CD8-positive, alpha-beta T cell (primary cell): ENCODE measurements at regions of chr13 and their contacts with region 1.

Region 1: DNA sequence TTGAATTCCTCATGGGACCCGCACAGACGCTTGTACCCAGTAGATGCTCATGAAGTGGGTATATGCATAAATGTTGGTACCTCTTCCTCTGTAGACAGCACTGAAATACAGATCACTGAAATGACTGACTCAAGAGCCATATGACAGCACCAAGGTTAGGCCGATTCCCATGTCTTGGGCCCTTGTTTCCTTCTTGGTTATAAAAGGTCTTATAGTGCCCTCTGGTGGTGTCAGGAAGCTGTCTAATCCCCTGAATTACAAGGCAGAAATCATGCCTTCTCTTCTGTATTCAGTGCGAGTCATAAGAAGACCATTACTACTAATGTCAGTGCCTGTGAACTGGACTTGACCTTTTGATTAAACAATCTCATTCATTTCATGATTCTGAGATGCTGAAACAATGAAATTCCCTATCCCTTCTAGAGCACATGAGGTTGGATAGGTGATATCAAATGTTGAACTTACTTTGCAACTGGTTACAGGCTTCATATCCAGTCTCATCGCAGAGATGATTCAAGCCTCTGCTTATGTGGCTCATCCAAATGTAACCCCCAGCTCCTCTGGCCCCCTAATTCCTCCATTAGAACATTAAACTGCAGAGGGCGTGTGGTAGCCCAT is 59.7 kb downstream of the SPATA13 start:
- DNase-seq: peak in 6 of 9 experiments; percentile 41 to 86 (median 54)
- ATAC-seq: peak; percentile 82
- H3K4me3 ChIP-seq: no peak overlapping the region
- H3K4me3 Mint-ChIP-seq: no peak overlapping the region
- H3K27ac ChIP-seq: no peak overlapping the region
- H3K27ac Mint-ChIP-seq: no peak overlapping the region
- H3K4me1 ChIP-seq: peaks cover 19% of the 10 kb centered on the region
- H3K4me1 Mint-ChIP-seq: peaks cover 49% of the 10 kb centered on the region
- H3K27me3 ChIP-seq: no peaks in the 10 kb centered on the region
- H3K27me3 Mint-ChIP-seq: no peaks in the 10 kb centered on the region
- CTCF ChIP-seq: peak; percentile 74

Region 2: GRCh38 chr13:23888658-23889614 is 331.3 kb before region 1 on chr13 and contains the start of gene MIPEP:
- CTCF ChIA-PET with region 1: no interaction called
- POLR2A ChIA-PET with region 1: no interaction called
- intact Hi-C with region 1: loop called in 1 of 2 experiments (anchors 10 kb)
- DNase-seq: peak; percentile 73 to 95 (median 87)
- ATAC-seq: peak; percentile 93
- H3K4me3 ChIP-seq: peak within 1 kb of the TSS; percentile 79
- H3K4me3 Mint-ChIP-seq: peak within 1 kb of the TSS; percentile 90
- H3K27ac ChIP-seq: peak within 1 kb of the TSS; percentile 61 to 71
- H3K27ac Mint-ChIP-seq: peak within 1 kb of the TSS; percentile 88
- H3K4me1 ChIP-seq: peaks cover 7% of the 10 kb centered on the region
- H3K4me1 Mint-ChIP-seq: peaks cover 23% of the 10 kb centered on the region
- H3K27me3 ChIP-seq: no peaks in the 10 kb centered on the region
- H3K27me3 Mint-ChIP-seq: peaks cover 3% of the 10 kb centered on the region
- CTCF ChIP-seq: peak; percentile 65
- total RNA-seq, gene MIPEP: 3.0 to 3.8 TPM

Region 3: DNA sequence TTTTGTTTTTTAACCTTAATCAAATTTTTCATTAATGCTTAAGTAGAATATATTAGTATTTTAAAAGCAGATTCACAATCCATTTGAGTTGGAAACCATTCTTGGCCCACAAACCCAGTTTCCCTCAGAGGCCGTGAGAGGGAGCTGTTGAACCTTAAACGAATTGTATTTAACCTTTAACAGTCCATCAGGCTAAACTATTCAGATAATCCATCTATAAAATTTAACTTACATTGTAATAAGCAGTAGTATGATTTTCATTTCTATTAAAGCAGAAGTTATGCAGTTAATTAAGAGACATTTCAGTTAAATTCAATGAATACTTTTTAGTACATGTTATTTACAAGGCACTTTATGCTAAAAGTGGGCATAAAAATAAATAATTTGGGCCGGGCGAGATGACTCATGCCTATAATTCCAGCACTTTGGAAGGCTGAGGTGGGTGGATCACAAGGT is 199.8 kb before region 1 on chr13:
- CTCF ChIA-PET with region 1: interaction called, 16 read pairs
- POLR2A ChIA-PET with region 1: no interaction called
- intact Hi-C with region 1: loop called (anchors 1 kb)
- DNase-seq: peak in 3 of 9 experiments; percentile 38 to 60 (median 50)
- ATAC-seq: peak; percentile 51
- H3K4me3 ChIP-seq: no peak overlapping the region
- H3K4me3 Mint-ChIP-seq: no peak overlapping the region
- H3K27ac ChIP-seq: no peak overlapping the region
- H3K27ac Mint-ChIP-seq: no peak overlapping the region
- H3K4me1 ChIP-seq: no peaks in the 10 kb centered on the region
- H3K4me1 Mint-ChIP-seq: no peaks in the 10 kb centered on the region
- H3K27me3 ChIP-seq: no peaks in the 10 kb centered on the region
- H3K27me3 Mint-ChIP-seq: no peaks in the 10 kb centered on the region
- CTCF ChIP-seq: peak; percentile 61

Region 4: GRCh38 chr13:24060993-24061392 is 159.2 kb before region 1 on chr13:
- CTCF ChIA-PET with region 1: interaction called, 59 read pairs
- POLR2A ChIA-PET with region 1: no interaction called
- intact Hi-C with region 1: no loop called
- DNase-seq: no peak
- ATAC-seq: no peak
- H3K4me3 ChIP-seq: no peak overlapping the region
- H3K4me3 Mint-ChIP-seq: no peak overlapping the region
- H3K27ac ChIP-seq: no peak overlapping the region
- H3K27ac Mint-ChIP-seq: no peak overlapping the region
- H3K4me1 ChIP-seq: peaks cover 8% of the 10 kb centered on the region
- H3K4me1 Mint-ChIP-seq: peaks cover 10% of the 10 kb centered on the region
- H3K27me3 ChIP-seq: no peaks in the 10 kb centered on the region
- H3K27me3 Mint-ChIP-seq: no peaks in the 10 kb centered on the region
- CTCF ChIP-seq: no peak

Region 5: GRCh38 chr13:24203811-24204210 is 16.4 kb before region 1 on chr13:
- CTCF ChIA-PET with region 1: interaction called, 10 read pairs
- POLR2A ChIA-PET with region 1: interaction called, 4 read pairs
- intact Hi-C with region 1: no loop called
- DNase-seq: peak in 2 of 9 experiments; percentile 43 to 62
- ATAC-seq: peak; percentile 94
- H3K4me3 ChIP-seq: no peak overlapping the region
- H3K4me3 Mint-ChIP-seq: peak overlapping the region; percentile 72
- H3K27ac ChIP-seq: no peak overlapping the region
- H3K27ac Mint-ChIP-seq: peak overlapping the region; percentile 56
- H3K4me1 ChIP-seq: peaks cover 23% of the 10 kb centered on the region
- H3K4me1 Mint-ChIP-seq: peaks cover 31% of the 10 kb centered on the region
- H3K27me3 ChIP-seq: no peaks in the 10 kb centered on the region
- H3K27me3 Mint-ChIP-seq: no peaks in the 10 kb centered on the region
- CTCF ChIP-seq: no peak